OCI-LY7 (cell line): ENCODE measurements at regions of chr5 and their contacts with region 1.

Region 1: DNA sequence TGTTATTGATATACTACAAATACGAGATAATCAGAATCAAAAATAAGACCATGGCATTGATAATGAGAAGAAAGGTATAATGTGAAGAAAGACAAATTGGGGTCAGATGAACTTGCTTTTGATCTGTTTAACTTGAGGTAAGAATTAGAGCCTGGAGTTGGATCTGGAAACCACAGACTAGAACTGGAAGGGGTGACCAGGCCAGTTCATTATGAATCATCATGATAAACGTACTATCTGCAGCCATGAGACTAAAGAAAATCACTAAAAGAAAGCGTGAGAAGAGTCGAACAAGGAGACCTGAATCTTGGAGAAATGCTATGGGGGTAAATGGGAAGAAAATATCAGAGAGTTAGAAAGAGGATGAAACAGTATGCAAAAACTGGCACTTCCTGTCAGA is 967.5 kb downstream of the NR2F1-AS1 start:
- DNase-seq: no peak
- H3K4me3 ChIP-seq: no peak overlapping the region
- H3K27ac ChIP-seq: no peak overlapping the region
- H3K4me1 ChIP-seq: no peaks in the 10 kb centered on the region
- CTCF ChIP-seq: no peak

Region 2: DNA sequence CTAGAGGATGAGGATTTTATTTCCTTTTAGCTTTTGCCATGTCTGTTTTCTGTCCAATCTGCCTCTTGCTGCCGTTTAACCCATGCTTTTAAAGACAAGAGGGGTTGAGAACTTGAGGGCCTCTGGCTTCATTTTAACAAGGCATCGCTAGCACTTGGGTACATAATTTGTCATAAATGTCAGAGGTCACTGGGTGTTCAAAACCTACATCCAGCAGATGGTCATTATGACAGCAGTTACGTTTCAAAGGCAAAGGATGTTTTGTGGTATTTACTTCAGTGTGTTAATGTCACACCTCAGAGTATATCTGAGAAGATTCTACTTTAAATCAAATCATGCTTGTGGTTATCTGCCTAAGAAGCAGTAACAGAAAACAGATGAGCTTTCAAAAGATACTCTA is 49.2 kb after region 1 on chr5:
- CTCF ChIA-PET with region 1: no interaction called
- POLR2A ChIA-PET with region 1: no interaction called
- intact Hi-C with region 1: loop called (anchors 1 kb)
- DNase-seq: no peak
- H3K4me3 ChIP-seq: no peak overlapping the region
- H3K27ac ChIP-seq: no peak overlapping the region
- H3K4me1 ChIP-seq: no peaks in the 10 kb centered on the region
- CTCF ChIP-seq: no peak